PC-3 (cell line): ENCODE measurements at regions of chr17 and their contacts with region 1.

Region 1: DNA sequence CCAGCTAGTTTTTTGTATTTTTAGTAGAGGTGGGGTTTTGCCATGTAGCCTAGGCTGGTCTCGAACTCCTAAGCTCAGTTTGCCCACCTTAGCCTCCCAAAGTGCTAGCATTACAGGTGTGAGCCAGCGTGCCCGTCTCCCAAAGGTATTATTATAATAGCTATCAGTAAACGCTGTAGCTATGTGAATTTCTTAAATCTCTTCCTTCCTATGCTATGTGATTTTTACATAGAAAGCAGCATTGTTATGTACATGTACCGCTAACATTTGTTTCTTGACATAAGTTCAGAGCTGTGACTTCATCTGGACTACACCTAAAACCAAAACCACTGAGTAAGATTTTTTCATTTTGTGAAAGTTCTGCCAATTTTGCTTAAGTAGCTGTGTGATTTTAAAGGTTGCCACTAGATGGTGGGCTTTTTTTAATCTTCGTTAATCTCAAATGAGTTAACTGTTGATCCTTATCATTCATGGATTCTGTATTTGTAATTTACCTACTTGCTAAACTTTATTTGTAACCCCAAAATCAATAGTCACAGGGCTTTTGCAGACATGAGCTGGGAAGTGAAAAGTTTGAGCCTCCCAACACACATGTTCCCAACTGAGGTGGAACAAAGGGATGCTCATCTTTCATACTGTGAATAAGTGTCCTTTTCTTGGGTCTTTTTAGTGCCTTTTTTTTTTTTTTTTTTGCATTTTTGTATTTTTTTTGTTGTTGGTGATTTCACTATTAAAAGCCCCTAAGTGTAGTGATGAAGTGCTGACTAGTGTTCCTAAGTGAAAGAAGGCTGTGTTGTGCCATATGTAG is 21.9 kb downstream of the PRKAR1A start:
- DNase-seq: peak; percentile 72
- ATAC-seq: peak; percentile 44
- H3K4me3 ChIP-seq: no peak overlapping the region
- H3K27ac ChIP-seq: peak overlapping the region; percentile 88
- H3K4me1 ChIP-seq: peaks cover 22% of the 10 kb centered on the region
- H3K27me3 ChIP-seq: no peaks in the 10 kb centered on the region
- CTCF ChIP-seq: peak; percentile 90

Region 2: GRCh38 chr17:68101075-68101992 is 432.8 kb before region 1 on chr17:
- CTCF ChIA-PET with region 1: no interaction called
- POLR2A ChIA-PET with region 1: no interaction called
- intact Hi-C with region 1: no loop called
- DNase-seq: peak; percentile 95
- ATAC-seq: peak; percentile 99
- H3K4me3 ChIP-seq: peak overlapping the region; percentile 79
- H3K27ac ChIP-seq: peak overlapping the region; percentile 23; the same call in 1 of the 2 replicates
- H3K4me1 ChIP-seq: peaks cover 16% of the 10 kb centered on the region
- H3K27me3 ChIP-seq: no peaks in the 10 kb centered on the region
- CTCF ChIP-seq: no peak

Region 3: GRCh38 chr17:68497885-68498319 is 36.2 kb before region 1 on chr17:
- CTCF ChIA-PET with region 1: no interaction called
- POLR2A ChIA-PET with region 1: no interaction called
- intact Hi-C with region 1: no loop called
- DNase-seq: no peak
- ATAC-seq: no peak
- H3K4me3 ChIP-seq: no peak overlapping the region
- H3K27ac ChIP-seq: no peak overlapping the region
- H3K4me1 ChIP-seq: no peaks in the 10 kb centered on the region
- H3K27me3 ChIP-seq: no peaks in the 10 kb centered on the region
- CTCF ChIP-seq: no peak

Region 4: GRCh38 chr17:68599091-68599490 is 65.0 kb after region 1 on chr17:
- CTCF ChIA-PET with region 1: no interaction called
- POLR2A ChIA-PET with region 1: no interaction called
- intact Hi-C with region 1: loop called (anchors 2 kb)
- DNase-seq: peak; percentile 58
- ATAC-seq: peak; percentile 83
- H3K4me3 ChIP-seq: no peak overlapping the region
- H3K27ac ChIP-seq: peak overlapping the region; percentile 24
- H3K4me1 ChIP-seq: peaks cover 4% of the 10 kb centered on the region; the same call in 1 of the 2 replicates
- H3K27me3 ChIP-seq: peaks cover 22% of the 10 kb centered on the region
- CTCF ChIP-seq: no peak

Region 5: GRCh38 chr17:68646701-68647104 is 112.6 kb after region 1 on chr17:
- CTCF ChIA-PET with region 1: no interaction called
- POLR2A ChIA-PET with region 1: no interaction called
- intact Hi-C with region 1: loop called (anchors 1 kb)
- DNase-seq: peak; percentile 88
- ATAC-seq: peak; percentile 81
- H3K4me3 ChIP-seq: no peak overlapping the region
- H3K27ac ChIP-seq: peak overlapping the region; percentile 67
- H3K4me1 ChIP-seq: peaks cover 23% of the 10 kb centered on the region
- H3K27me3 ChIP-seq: 0 out of 2 replicates have a peak, but pooled peaks cover 3% of the 10 kb centered on the region
- CTCF ChIP-seq: no peak